ENCODE measurements at regions of chr19 and their contacts with region 1.

Region 1: DNA sequence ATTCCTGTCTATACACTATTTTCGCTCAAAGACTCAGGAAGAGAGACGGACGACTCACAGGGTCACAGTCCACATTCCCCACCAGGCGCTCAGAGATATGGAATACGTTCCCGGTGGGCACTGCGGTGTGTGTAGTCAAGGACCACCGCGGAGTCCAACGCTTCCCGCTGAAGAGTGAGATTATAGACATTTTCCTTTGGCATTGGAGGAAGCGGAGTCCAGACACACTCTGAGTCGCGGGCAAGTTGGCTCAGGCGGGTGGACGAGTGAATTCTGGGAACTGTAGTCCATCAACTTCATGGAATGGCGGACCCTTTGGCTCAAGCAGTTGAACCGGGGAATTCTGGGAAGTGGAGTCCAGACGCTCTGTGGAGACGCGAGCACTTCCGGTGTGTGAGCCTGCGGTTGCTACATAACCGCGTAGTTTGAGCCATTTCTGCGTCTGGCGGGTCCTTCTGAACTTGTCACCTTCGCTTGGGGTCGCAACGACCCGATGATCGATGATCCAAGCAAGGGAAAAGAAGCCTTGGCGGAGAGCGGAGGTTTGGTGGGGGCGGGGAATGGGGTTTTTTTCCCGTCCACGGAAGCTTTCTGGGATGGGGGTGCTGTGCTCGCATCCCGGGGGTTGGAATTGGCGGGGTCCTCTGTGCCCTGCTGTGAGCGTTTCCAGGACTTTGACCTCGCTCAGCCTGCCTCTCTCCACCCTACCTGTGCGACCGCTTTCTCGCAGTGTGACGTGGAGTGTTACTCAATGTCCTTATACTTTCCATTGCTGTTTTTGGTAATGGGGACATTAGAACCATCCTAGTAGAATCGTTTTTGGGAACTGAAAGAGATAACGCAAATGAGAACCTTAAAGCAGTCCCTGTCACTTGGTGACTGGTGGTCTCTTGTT is at the start of gene ZNF230:
- DNase-seq: peak; percentile 95
- H3K4me3 Mint-ChIP-seq: peak within 1 kb of the TSS; percentile 97
- H3K27ac Mint-ChIP-seq: peak within 1 kb of the TSS; percentile 96
- H3K4me1 Mint-ChIP-seq: peaks cover 15% of the 10 kb centered on the region
- H3K27me3 Mint-ChIP-seq: no peaks in the 10 kb centered on the region
- total RNA-seq, gene ZNF230: 2.4 and 4.5 TPM in 2 replicates

Region 2: DNA sequence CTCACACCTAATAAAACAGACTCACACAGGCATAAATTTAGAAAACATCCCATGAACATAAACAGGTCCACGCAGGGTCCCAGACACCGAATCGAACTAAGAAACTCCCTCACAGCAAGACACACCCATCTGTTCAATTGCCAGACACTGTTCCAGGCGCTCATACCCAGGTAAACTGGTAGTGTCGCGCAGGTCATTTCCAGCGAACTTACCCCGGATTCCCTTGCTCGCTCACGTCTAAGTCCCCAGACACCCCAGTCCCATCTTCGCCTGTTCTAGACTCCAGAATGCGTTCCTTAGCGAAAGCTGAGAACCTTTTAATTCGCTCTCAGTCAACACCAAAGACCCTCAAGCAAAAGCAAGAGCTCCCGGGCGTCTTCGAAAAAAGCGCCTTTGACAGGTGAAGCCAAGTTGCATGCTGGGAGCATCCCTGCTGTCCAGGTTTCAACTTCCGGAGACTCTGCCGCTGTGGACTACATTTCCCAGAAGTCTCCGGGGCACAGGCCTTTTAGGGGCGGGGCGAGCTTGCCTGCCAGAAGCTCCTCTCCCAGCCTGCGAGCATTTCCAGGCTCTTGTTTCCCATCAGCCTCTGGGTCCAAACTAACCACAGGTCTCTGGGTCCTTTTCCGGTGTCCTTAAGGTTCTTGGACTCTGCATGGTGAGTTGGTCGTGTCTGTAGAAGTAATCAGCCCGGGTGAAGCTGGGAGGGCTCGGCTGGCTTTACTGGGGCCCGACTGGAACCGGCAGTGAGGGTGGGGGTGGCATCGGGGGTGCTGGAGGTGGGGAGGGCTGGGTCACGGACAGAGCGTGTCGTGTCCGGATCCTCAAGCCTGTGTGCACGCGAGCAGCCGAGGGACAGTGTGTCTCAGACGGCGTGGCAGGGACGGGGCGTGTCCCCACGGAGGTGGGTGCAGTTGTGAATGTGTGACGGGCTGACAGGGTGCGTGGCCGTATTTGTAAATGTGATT is 175.7 kb before region 1 on chr19 and contains the start of gene ZNF283:
- intact Hi-C with region 1: loop called (anchors 2 kb)
- DNase-seq: peak; percentile 95
- H3K4me3 Mint-ChIP-seq: peak within 1 kb of the TSS; percentile 87
- H3K27ac Mint-ChIP-seq: peak within 1 kb of the TSS; percentile 42
- H3K4me1 Mint-ChIP-seq: peaks cover 13% of the 10 kb centered on the region
- H3K27me3 Mint-ChIP-seq: peaks cover 11% of the 10 kb centered on the region
- total RNA-seq, gene ZNF283: 4.0 and 5.7 TPM in 2 replicates

Region 3: GRCh38 chr19:43983912-43984686 is 18.7 kb before region 1 on chr19 and contains the start of gene ZNF155:
- intact Hi-C with region 1: loop called (anchors 1 kb)
- DNase-seq: peak; percentile 91
- H3K4me3 Mint-ChIP-seq: peak within 1 kb of the TSS; percentile 97
- H3K27ac Mint-ChIP-seq: peak within 1 kb of the TSS; percentile 93
- H3K4me1 Mint-ChIP-seq: peaks cover 8% of the 10 kb centered on the region
- H3K27me3 Mint-ChIP-seq: no peaks in the 10 kb centered on the region
- total RNA-seq, gene ZNF155: 4.6 and 6.6 TPM in 2 replicates

Region 4: GRCh38 chr19:44032001-44032610 is 29.3 kb after region 1 on chr19:
- intact Hi-C with region 1: no loop called
- DNase-seq: no peak
- H3K4me3 Mint-ChIP-seq: no peak overlapping the region
- H3K27ac Mint-ChIP-seq: no peak overlapping the region
- H3K4me1 Mint-ChIP-seq: no peaks in the 10 kb centered on the region
- H3K27me3 Mint-ChIP-seq: no peaks in the 10 kb centered on the region

Region 5: GRCh38 chr19:44071824-44072542 is 69.2 kb after region 1 on chr19 and contains the start of gene ZNF284:
- intact Hi-C with region 1: loop called (anchors 2 kb)
- DNase-seq: peak; percentile 94
- H3K4me3 Mint-ChIP-seq: peak within 1 kb of the TSS; percentile 91
- H3K27ac Mint-ChIP-seq: peak within 1 kb of the TSS; percentile 73
- H3K4me1 Mint-ChIP-seq: peaks cover 13% of the 10 kb centered on the region
- H3K27me3 Mint-ChIP-seq: no peaks in the 10 kb centered on the region
- total RNA-seq, gene ZNF284: 1.2 TPM in 2 replicates

Region 6: GRCh38 chr19:44083866-44084265 is 81.1 kb after region 1 on chr19:
- intact Hi-C with region 1: no loop called
- DNase-seq: no peak
- H3K4me3 Mint-ChIP-seq: no peak overlapping the region
- H3K27ac Mint-ChIP-seq: no peak overlapping the region
- H3K4me1 Mint-ChIP-seq: no peaks in the 10 kb centered on the region
- H3K27me3 Mint-ChIP-seq: no peaks in the 10 kb centered on the region

Region 7: GRCh38 chr19:44113138-44113783 is 110.4 kb after region 1 on chr19 and contains the start of gene ZNF225:
- intact Hi-C with region 1: loop called (anchors 2 kb)
- DNase-seq: peak; percentile 95
- H3K4me3 Mint-ChIP-seq: peak within 1 kb of the TSS; percentile 99
- H3K27ac Mint-ChIP-seq: peak within 1 kb of the TSS; percentile 91
- H3K4me1 Mint-ChIP-seq: peaks cover 17% of the 10 kb centered on the region
- H3K27me3 Mint-ChIP-seq: no peaks in the 10 kb centered on the region
- total RNA-seq, gene ZNF225: 2.7 and 3.2 TPM in 2 replicates

Region 8: GRCh38 chr19:44212250-44212865 is 209.5 kb after region 1 on chr19 and contains the start of gene ZNF227:
- intact Hi-C with region 1: loop called (anchors 1 kb)
- DNase-seq: peak; percentile 93
- H3K4me3 Mint-ChIP-seq: peak within 1 kb of the TSS; percentile 94
- H3K27ac Mint-ChIP-seq: peak within 1 kb of the TSS; percentile 91
- H3K4me1 Mint-ChIP-seq: peaks cover 12% of the 10 kb centered on the region
- H3K27me3 Mint-ChIP-seq: no peaks in the 10 kb centered on the region
- total RNA-seq, gene ZNF227: 17.8 and 18.8 TPM in 2 replicates

Region 9: DNA sequence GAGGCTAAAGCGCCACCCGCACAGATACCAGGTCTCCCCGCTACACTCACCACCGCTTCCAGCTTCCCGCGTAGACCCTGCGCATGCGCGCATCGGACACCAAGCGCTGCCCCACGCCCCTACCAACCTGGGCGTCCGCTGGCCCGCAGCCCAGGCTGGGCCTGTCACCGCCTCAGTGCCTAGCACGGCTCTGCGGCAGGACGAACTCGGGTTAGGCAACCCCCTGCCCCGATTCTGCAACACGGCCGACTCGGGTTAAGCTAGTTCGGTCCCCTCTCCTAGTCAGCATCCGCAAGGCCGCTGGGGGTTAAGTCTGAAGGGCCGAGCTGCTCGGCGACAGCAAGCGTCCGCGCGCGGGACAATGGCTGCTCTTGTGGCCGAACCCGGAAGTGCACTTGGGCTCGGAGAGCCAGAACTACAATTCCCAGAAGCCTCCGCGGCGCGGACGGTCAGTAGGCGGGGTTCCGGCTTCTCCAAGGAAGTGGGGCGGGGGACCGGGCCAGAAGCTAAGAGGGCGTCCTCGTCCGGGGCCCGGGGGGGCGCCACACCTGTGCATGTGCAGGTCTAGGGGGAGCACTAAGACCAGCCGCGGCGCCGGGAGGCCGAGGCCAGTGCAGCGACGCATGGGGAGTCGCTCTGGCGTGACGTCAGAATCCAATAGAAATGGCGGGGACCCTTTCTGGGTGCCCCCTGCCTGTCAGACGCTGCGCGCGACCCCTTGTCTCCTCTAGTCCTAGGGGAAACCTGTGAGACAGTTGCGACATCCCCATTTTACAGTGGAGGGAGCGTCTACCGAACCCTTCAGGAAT is 497.5 kb after region 1 on chr19 and contains the start of gene ZNF180:
- intact Hi-C with region 1: loop called (anchors 2 kb)
- DNase-seq: peak; percentile 99
- H3K4me3 Mint-ChIP-seq: peak within 1 kb of the TSS; percentile 94
- H3K27ac Mint-ChIP-seq: peak within 1 kb of the TSS; percentile 93
- H3K4me1 Mint-ChIP-seq: peaks cover 27% of the 10 kb centered on the region
- H3K27me3 Mint-ChIP-seq: no peaks in the 10 kb centered on the region
- total RNA-seq, gene ZNF180: 7.0 and 8.5 TPM in 2 replicates